ENCODE measurements at regions of chr2 and their contacts with region 1.

Region 1: DNA sequence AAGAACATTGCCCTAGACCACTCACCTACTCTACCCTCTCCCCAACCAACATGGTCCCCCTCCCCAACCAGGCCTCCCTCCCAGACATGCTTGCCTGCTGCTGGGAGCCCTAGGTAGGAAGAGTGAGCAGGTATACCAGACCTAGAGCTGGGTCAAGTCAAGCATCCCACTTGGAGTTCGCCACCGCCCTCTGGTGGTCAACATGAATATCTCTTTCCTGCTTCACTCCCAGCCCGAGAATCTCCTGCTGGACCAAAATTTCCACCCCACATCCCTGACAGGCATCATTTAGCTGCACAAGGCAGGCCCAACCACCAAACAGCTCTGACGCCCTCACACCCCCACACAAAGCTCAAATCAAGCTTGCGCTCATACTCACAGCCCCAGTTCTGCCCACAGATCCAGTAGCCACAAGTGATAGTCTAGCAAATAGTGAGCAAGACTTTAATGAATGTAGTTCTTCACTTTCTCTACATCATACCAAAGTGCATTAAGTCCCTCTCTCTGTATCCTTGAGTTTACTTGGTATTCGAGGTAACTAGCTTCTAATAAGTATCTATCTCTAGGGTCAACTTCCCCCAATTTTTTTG is 116.0 kb downstream of the TNS1 start:
- DNase-seq: peak; percentile 83
- H3K4me3 ChIP-seq: no peak overlapping the region
- H3K27ac ChIP-seq: peak overlapping the region; percentile 6; the same call in 1 of the 2 replicates
- H3K4me1 ChIP-seq: peaks cover 10% of the 10 kb centered on the region
- H3K27me3 ChIP-seq: no peaks in the 10 kb centered on the region

Region 2: DNA sequence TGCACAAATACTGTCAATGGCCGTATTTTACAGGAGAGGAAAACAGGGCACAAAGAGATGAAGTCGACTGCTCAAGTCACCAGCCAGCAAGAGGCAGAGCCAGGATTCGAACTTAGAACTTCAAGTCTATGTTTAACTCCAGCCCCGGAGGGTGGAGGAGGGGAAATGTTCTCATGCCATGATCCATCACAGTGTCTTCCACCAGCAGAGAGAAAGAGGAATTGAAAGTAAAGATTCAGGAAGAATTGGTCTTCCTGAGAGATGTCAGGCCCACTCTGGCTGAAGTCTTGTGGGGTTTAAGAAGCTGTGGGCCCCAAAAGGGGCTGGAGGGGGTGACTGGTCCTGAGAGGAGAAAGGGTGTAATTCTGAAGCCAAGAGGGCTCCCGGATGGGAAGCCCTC is 144.0 kb before region 1 on chr2:
- in situ Hi-C with region 1: no loop called
- DNase-seq: no peak
- H3K4me3 ChIP-seq: no peak overlapping the region
- H3K27ac ChIP-seq: no peak overlapping the region
- H3K4me1 ChIP-seq: peaks cover 10% of the 10 kb centered on the region; the same call in 1 of the 2 replicates
- H3K27me3 ChIP-seq: no peaks in the 10 kb centered on the region

Region 3: DNA sequence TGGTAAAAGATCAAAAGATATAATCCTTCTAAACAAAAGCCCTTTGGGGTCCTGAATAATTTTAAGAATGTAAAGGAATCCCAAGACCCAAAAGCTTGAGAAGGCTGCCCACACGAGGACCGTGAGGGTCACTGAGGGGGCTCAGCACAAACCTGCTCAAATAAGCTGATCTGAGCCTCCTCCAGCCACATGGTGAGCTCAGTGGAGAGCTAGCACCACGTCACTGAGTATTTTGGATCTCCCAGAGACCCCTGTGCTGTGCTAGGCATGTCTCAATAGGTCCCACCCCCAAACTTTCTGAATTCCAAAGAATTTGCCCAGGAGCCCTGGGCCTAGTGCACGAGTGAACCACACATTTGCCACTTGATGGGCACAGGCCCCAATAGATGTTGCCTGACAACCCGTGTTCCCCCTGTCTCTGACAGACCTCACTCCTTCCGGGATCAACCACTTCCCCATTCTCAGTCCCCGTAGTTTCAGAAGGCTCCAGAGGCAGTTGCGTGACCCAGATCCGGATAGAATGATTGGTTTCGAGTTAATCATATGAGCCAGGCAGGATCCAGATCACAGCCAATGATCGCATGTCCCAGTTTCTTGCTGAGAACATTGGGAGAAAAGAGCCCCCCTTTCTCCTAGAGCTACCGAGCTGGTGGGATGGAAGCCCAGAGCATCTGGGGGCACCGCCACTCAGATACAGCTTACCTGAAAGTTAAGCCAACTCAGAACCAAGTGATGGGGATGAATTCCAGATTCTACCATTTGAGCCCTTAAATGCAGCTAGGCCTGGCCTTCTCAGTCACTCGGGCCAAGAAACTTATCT is 87.9 kb before region 1 on chr2:
- in situ Hi-C with region 1: loop called (anchors 10 kb)
- DNase-seq: no peak
- H3K4me3 ChIP-seq: no peak overlapping the region
- H3K27ac ChIP-seq: no peak overlapping the region
- H3K4me1 ChIP-seq: no peaks in the 10 kb centered on the region
- H3K27me3 ChIP-seq: no peaks in the 10 kb centered on the region

Region 4: GRCh38 chr2:217980036-217980435 is 93.2 kb after region 1 on chr2:
- in situ Hi-C with region 1: loop called (anchors 5 kb)
- DNase-seq: peak; percentile 78
- H3K4me3 ChIP-seq: no peak overlapping the region
- H3K27ac ChIP-seq: peak overlapping the region; percentile 52
- H3K4me1 ChIP-seq: peaks cover 24% of the 10 kb centered on the region
- H3K27me3 ChIP-seq: no peaks in the 10 kb centered on the region

Region 5: DNA sequence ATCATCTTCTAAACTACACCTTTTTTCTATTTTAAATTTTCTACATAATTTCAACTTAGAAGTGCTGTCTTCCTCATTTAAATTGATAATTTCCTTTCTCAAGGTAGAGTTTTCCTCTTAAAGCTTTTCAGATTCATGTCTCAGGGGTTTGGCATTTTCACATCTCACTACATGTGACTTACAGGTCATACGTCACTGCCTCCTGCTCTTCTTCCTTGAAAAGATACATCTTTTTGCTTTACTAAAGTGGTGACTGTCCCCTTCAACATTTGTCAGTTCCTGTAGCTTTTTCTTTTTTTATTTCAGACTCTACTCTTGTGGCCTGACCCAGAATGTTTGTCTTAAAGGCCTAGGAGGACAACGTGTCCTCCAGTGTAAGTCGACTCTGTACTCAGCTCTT is 165.1 kb after region 1 on chr2:
- in situ Hi-C with region 1: no loop called
- DNase-seq: no peak
- H3K4me3 ChIP-seq: no peak overlapping the region
- H3K27ac ChIP-seq: no peak overlapping the region
- H3K4me1 ChIP-seq: no peaks in the 10 kb centered on the region
- H3K27me3 ChIP-seq: peaks cover 86% of the 10 kb centered on the region

Measured in GM23248 (cell line).